Activated CD4-positive, alpha-beta T cell treated with anti-CD3 and anti-CD28 coated beads, Interleukin-2, amount 10 ng/mL, durations not matched to agents 24 days and 14 days (primary cell): ENCODE measurements at regions of chr1 and their contacts with region 1.

Region 1: GRCh38 chr1:38046884-38047602 is 450 bp upstream of the POU3F1 start:
- DNase-seq: peak; percentile 91
- H3K4me3 Mint-ChIP-seq: peak overlapping the region; percentile 81
- H3K27ac Mint-ChIP-seq: peak overlapping the region; percentile 58
- H3K4me1 Mint-ChIP-seq: peaks cover 9% of the 10 kb centered on the region
- H3K27me3 Mint-ChIP-seq: peaks cover 48% of the 10 kb centered on the region

Region 2: DNA sequence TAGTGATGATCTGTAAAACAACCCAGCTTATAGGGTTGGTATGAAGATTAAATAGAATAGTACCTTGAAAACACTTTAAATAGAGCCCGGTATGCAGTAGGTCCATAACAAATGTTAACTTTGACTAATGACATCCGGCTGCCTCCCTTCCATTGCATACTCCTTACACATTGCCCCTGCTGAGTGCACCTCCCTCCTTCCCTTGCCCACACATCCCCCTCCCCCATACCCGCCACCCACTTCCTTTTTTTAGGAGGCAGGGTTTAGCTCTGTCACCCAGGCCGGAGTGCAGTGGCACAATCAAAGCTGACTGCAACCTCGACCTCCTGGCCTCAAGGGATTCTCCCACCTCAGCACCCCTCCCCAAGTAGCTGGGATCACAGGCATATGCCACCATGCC is 597.1 kb before region 1 on chr1:
- intact Hi-C with region 1: no loop called
- DNase-seq: no peak
- H3K4me3 Mint-ChIP-seq: no peak overlapping the region
- H3K27ac Mint-ChIP-seq: no peak overlapping the region
- H3K4me1 Mint-ChIP-seq: peaks cover 11% of the 10 kb centered on the region
- H3K27me3 Mint-ChIP-seq: peaks cover 10% of the 10 kb centered on the region

Region 3: DNA sequence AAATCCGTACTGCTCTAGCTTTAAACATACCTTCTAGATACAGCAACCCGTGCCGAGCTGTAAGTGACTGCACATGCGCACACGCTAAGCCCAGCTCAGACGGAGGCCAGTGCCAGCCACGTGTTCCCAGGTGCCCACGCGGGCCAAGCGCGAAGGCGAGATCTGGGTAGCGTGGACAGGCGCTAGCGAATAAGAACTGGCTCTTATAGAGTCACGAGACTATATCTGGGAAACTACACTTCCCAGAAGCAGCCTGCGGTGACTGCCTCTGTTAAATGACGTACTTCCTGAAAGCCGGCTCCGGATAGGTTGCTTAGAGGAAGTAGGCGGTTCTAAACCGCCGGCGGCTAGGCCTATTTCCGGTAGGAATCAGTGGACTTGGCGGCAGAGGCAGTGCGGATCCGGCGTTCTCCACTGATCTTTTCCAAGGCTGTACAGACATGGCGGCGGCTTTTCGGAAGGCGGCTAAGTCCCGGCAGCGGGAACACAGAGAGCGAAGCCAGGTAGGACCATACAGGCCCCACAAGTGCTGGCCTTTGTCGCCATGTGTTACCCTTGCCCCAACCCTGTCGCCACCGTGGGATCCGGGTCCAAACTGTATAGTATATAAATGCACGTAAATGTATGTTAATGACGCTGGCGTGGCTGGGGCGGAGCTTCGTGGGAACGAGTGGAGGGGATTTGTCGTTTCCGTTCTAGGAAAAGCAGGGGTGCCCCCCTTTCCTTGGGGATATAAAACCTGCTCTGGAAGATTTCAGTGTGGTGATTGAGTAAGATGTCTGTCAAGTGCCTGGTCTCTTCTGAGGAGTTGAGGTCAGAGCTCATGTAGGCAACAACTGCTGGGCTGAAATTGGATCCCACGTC is 34.4 kb before region 1 on chr1 and contains the start of gene UTP11:
- intact Hi-C with region 1: loop called (anchors 1 kb)
- DNase-seq: peak; percentile 97
- H3K4me3 Mint-ChIP-seq: peak within 1 kb of the TSS; percentile 92
- H3K27ac Mint-ChIP-seq: peak within 1 kb of the TSS; percentile 95
- H3K4me1 Mint-ChIP-seq: peaks cover 46% of the 10 kb centered on the region
- H3K27me3 Mint-ChIP-seq: no peaks in the 10 kb centered on the region
- total RNA-seq, gene UTP11: 99.5 and 111 TPM in 2 replicates

Region 4: DNA sequence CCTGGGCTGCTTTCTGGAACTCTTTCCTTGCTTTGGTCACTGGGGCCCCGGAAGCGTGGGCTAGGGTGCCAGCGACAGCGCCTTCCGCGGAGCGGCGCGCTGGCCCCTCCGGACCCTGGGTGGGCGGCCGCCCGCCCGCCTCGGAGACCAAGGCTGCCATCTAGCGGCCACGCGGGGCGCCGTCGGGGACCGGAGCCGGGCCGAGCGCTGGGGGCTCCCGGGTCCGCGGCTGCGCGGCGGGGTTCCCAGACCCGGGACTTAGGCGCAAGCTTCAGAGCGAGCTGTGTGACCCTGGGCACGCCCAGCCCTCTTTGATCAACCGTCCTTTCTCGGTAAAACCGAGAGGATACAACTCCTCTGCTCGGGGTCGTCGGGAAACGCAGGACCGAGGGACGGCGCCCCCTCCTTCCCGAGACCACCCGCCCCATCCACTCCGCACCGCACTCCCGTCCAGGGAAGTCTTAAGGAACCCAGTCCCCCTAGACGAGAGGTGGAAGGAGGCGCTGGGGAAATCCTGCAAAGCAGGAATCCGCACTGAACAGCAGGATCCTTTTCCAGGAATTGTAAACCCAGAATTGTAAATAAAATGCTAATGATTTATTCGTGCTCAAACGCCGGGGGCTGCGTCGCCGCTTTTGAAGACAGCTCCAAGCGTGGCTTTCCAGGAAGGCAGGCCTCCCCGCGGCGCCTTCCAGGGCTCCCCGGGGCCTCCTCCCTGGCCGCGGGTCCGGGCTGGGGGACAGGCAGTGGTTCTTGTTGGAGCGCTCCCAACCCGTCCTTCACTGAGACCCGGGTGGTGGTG is 771.3 kb after region 1 on chr1:
- intact Hi-C with region 1: loop called (anchors 5 kb)
- DNase-seq: peak; percentile 86
- H3K4me3 Mint-ChIP-seq: no peak overlapping the region
- H3K27ac Mint-ChIP-seq: no peak overlapping the region
- H3K4me1 Mint-ChIP-seq: peaks cover 3% of the 10 kb centered on the region
- H3K27me3 Mint-ChIP-seq: peaks cover 67% of the 10 kb centered on the region